Activated T-helper 2 cell treated with anti-CD3 and anti-CD28 coated beads, Interferon-gamma antibody, Interleukin-2, Interleukin-4, amounts not matched to agents 10 μg/mL and 5 μg/mL and 100 μg/mL, durations not matched to agents 14 hours and 24 hours and 36 hours (primary cell): ENCODE measurements at regions of chr5 and their contacts with region 1.

Region 1: DNA sequence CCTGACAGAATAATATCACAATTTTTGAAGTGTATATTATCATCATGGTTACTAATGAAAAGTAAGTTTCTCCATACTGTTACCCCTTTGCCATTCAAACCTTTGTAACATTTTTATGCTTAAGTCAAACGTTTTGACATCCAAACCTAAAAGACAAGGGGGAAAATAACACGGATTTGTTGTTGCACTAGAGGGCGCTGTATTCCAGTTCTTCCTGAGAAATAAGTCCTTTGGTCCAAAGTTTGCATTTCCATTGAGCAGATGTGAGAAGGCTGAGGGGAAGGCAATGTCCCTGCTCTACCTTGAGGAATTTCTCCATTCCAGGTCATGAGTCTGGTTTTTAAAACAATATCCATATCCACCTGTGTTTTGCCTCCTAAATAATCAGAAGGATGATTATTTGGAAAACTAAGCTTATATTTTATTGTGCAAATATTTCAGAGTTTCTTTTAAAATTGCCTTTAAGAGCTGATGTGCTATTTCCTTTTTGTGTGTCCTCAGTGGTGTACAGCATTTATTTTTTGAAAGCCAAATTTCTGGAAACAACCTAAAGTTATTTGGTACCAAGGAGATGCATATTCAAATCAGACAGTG is 9.7 kb downstream of the LECT2 start:
- DNase-seq: no peak
- H3K4me3 Mint-ChIP-seq: no peak overlapping the region
- H3K27ac Mint-ChIP-seq: no peak overlapping the region
- H3K4me1 Mint-ChIP-seq: no peaks in the 10 kb centered on the region
- H3K27me3 Mint-ChIP-seq: peaks cover 31% of the 10 kb centered on the region

Region 2: DNA sequence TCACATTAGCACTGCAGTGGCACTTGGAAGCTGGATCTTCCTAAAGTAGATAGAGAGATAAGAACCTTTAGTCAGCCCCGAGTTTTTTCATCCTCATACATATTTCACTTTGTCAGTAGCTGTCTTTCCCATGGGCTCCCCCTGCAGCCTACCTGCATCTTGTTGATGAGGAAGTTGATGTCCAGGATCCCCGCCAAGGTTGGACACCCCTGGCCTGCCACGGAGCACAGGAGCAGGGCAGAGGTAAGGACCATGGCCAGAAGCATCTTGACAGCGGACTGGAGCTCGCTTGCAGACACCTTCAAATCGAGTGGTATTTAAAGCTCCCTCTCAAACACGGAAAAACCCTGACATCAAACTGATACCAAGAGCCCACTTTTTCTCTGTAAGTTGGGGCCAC is 49.5 kb before region 1 on chr5 and contains the start of gene IL9:
- intact Hi-C with region 1: no loop called
- DNase-seq: no peak
- H3K4me3 Mint-ChIP-seq: peak within 1 kb of the TSS; percentile 37
- H3K27ac Mint-ChIP-seq: no peak within 1 kb of the TSS
- H3K4me1 Mint-ChIP-seq: peaks cover 22% of the 10 kb centered on the region
- H3K27me3 Mint-ChIP-seq: peaks cover 62% of the 10 kb centered on the region
- total RNA-seq, gene IL9: 94.0 and 104 TPM in 2 replicates

Region 3: DNA sequence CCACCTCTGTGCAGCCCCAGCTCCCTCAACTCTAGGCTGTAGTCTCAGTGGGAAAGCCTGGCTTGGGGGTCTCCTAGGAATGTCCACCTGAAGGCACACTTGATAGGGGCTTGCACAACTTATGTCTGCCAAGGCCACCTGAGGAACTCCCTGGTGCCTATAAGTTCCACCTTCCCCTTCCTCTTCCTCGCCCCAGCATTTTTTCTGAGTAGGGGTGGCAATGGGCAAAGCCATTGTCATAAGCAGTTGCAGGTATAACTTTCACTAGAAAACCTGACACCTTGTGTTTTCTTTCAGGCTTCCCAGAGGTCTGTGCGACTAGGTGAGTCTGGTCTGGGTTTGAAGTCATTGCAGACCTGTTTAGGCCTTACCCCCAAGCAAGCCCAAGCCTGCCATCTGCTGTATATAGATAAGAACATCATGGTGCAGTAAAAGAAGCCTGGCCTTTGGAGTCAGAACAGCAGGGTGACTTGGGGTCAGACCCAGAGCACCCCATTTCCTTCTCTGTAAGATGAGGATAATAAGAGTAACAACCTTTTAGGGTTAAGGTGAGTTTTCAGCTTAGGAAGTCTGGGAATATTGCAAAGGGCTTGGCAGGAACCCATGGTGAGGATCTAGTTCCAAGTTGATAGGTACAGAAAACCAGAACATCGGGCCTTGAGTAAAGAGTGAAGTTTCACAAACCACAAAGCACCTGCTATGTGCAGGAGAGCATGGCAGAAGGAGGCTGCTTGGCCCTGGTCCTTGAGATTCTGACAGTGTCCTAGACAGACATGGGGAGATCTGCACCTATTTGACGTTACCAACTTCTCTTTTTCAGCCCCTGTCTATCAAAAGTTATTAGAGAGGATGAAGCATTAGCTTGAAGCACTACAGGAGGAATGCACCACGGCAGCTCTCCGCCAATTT is 117.6 kb after region 1 on chr5:
- intact Hi-C with region 1: loop called (anchors 1 kb)
- DNase-seq: no peak
- H3K4me3 Mint-ChIP-seq: no peak overlapping the region
- H3K27ac Mint-ChIP-seq: no peak overlapping the region
- H3K4me1 Mint-ChIP-seq: no peaks in the 10 kb centered on the region
- H3K27me3 Mint-ChIP-seq: peaks cover 7% of the 10 kb centered on the region

Region 4: GRCh38 chr5:136174021-136174659 is 229.1 kb after region 1 on chr5:
- intact Hi-C with region 1: loop called (anchors 1 kb)
- DNase-seq: no peak
- H3K4me3 Mint-ChIP-seq: no peak overlapping the region
- H3K27ac Mint-ChIP-seq: no peak overlapping the region
- H3K4me1 Mint-ChIP-seq: no peaks in the 10 kb centered on the region
- H3K27me3 Mint-ChIP-seq: no peaks in the 10 kb centered on the region

Region 5: GRCh38 chr5:136212252-136212721 is 267.2 kb after region 1 on chr5:
- intact Hi-C with region 1: loop called (anchors 10 kb)
- DNase-seq: peak; percentile 14
- H3K4me3 Mint-ChIP-seq: no peak overlapping the region
- H3K27ac Mint-ChIP-seq: no peak overlapping the region
- H3K4me1 Mint-ChIP-seq: peaks cover 2% of the 10 kb centered on the region
- H3K27me3 Mint-ChIP-seq: peaks cover 6% of the 10 kb centered on the region